ENCODE measurements at regions of chr4 and their contacts with region 1.

Region 1: GRCh38 chr4:138090150-138090917 is 151.8 kb downstream of the SLC7A11 start:
- DNase-seq: peak in 1 of 2 experiments; percentile 67
- H3K4me3 ChIP-seq: no peak overlapping the region
- H3K27ac ChIP-seq: no peak overlapping the region
- H3K4me1 ChIP-seq: no peaks in the 10 kb centered on the region
- H3K27me3 ChIP-seq: no peaks in the 10 kb centered on the region
- CTCF ChIP-seq: peak in 2 of 3 experiments; percentile 63 to 67; a peak in 3 of 4 replicates
- EP300 ChIP-seq: no peak
- POLR2A ChIP-seq: no peak
- RAD21 ChIP-seq: peak; percentile 81 to 82

Region 2: DNA sequence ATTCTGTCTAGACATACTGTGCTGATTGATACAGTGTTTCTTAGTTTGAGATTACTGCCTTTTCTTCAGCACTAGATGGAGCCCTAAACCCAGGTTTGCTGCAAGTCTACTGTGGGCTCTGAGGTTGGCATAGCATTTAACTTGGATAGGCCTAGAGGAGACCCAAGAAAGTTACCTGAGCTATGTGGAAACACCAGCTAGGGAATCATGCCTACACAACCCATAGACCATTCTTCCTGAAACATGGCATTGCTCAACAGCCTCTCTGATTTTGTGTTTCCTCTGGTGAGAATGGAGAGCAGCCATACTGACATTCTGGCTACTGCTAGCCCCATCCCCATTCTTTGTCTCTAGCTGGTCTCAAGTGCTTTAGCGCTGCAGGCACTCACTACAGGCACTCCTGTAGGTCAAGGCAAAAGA is 270.4 kb before region 1 on chr4:
- CTCF ChIA-PET with region 1: interaction called, 32 read pairs
- POLR2A ChIA-PET with region 1: no interaction called
- DNase-seq: peak; percentile 43 to 47
- H3K4me3 ChIP-seq: no peak overlapping the region
- H3K27ac ChIP-seq: no peak overlapping the region
- H3K4me1 ChIP-seq: no peaks in the 10 kb centered on the region
- H3K27me3 ChIP-seq: no peaks in the 10 kb centered on the region
- CTCF ChIP-seq: peak in 2 of 3 experiments; percentile 77 to 84; a peak in 3 of 4 replicates
- EP300 ChIP-seq: no peak
- POLR2A ChIP-seq: no peak
- RAD21 ChIP-seq: peak; percentile 97

Region 3: GRCh38 chr4:138062929-138063328 is 27.4 kb before region 1 on chr4:
- CTCF ChIA-PET with region 1: interaction called, 19 read pairs
- POLR2A ChIA-PET with region 1: no interaction called
- DNase-seq: no peak
- H3K4me3 ChIP-seq: no peak overlapping the region
- H3K27ac ChIP-seq: no peak overlapping the region
- H3K4me1 ChIP-seq: no peaks in the 10 kb centered on the region
- H3K27me3 ChIP-seq: no peaks in the 10 kb centered on the region
- CTCF ChIP-seq: peak; percentile 25 to 49 (median 38); a peak in 3 of 4 replicates
- EP300 ChIP-seq: no peak
- POLR2A ChIP-seq: no peak
- RAD21 ChIP-seq: peak; percentile 31 to 47

Region 4: DNA sequence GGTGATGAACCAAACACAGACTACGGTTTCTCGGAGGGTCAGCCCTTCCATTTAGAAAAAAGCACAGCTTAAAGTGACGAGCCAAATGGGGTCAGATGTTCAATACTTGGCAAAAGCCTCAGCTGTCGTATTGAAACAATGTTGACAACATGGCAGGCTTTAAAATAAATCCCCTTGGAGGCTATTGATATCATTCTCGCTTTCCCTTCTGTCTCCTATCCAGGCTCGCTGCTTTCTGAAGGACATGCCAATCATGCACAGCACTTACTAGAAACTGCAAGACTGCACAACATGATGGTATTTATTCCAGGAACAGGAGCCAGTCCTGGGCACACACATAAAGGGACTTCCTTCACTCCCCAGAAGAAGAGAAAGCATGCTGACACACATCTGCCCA is 13.9 kb after region 1 on chr4:
- CTCF ChIA-PET with region 1: interaction called, 32 read pairs
- POLR2A ChIA-PET with region 1: no interaction called
- DNase-seq: no peak
- H3K4me3 ChIP-seq: no peak overlapping the region
- H3K27ac ChIP-seq: no peak overlapping the region
- H3K4me1 ChIP-seq: peaks cover 0 to 4% (median 0%) of the 10 kb centered on the region in 4 experiments; a peak in 1 of 7 replicates
- H3K27me3 ChIP-seq: no peaks in the 10 kb centered on the region
- CTCF ChIP-seq: no peak
- EP300 ChIP-seq: no peak
- POLR2A ChIP-seq: no peak
- RAD21 ChIP-seq: no peak

Region 5: GRCh38 chr4:138138774-138139173 is 48.4 kb after region 1 on chr4:
- CTCF ChIA-PET with region 1: interaction called, 20 read pairs
- POLR2A ChIA-PET with region 1: no interaction called
- DNase-seq: no peak
- H3K4me3 ChIP-seq: no peak overlapping the region
- H3K27ac ChIP-seq: no peak overlapping the region
- H3K4me1 ChIP-seq: no peaks in the 10 kb centered on the region
- H3K27me3 ChIP-seq: no peaks in the 10 kb centered on the region
- CTCF ChIP-seq: no peak
- EP300 ChIP-seq: no peak
- POLR2A ChIP-seq: no peak
- RAD21 ChIP-seq: no peak

Region 6: GRCh38 chr4:138182838-138183426 is 92.6 kb after region 1 on chr4:
- CTCF ChIA-PET with region 1: interaction called, 32 read pairs
- POLR2A ChIA-PET with region 1: no interaction called
- DNase-seq: no peak
- H3K4me3 ChIP-seq: no peak overlapping the region
- H3K27ac ChIP-seq: no peak overlapping the region
- H3K4me1 ChIP-seq: peaks cover 0 to 7% (median 5%) of the 10 kb centered on the region in 4 experiments; a peak in 2 of 7 replicates
- H3K27me3 ChIP-seq: no peaks in the 10 kb centered on the region
- CTCF ChIP-seq: peak in 2 of 3 experiments; percentile 25 to 57; a peak in 2 of 4 replicates
- EP300 ChIP-seq: no peak
- POLR2A ChIP-seq: no peak
- RAD21 ChIP-seq: peak; percentile 79

Region 7: GRCh38 chr4:138236035-138236434 is 145.7 kb after region 1 on chr4:
- CTCF ChIA-PET with region 1: no interaction called
- POLR2A ChIA-PET with region 1: no interaction called
- DNase-seq: no peak
- H3K4me3 ChIP-seq: no peak overlapping the region
- H3K27ac ChIP-seq: no peak overlapping the region
- H3K4me1 ChIP-seq: no peaks in the 10 kb centered on the region
- H3K27me3 ChIP-seq: no peaks in the 10 kb centered on the region
- CTCF ChIP-seq: no peak
- EP300 ChIP-seq: no peak
- POLR2A ChIP-seq: no peak; a peak in 1 of 3 replicates
- RAD21 ChIP-seq: no peak